PC-9 (cell line): ENCODE measurements at regions of chr4 and their contacts with region 1.

Region 1: DNA sequence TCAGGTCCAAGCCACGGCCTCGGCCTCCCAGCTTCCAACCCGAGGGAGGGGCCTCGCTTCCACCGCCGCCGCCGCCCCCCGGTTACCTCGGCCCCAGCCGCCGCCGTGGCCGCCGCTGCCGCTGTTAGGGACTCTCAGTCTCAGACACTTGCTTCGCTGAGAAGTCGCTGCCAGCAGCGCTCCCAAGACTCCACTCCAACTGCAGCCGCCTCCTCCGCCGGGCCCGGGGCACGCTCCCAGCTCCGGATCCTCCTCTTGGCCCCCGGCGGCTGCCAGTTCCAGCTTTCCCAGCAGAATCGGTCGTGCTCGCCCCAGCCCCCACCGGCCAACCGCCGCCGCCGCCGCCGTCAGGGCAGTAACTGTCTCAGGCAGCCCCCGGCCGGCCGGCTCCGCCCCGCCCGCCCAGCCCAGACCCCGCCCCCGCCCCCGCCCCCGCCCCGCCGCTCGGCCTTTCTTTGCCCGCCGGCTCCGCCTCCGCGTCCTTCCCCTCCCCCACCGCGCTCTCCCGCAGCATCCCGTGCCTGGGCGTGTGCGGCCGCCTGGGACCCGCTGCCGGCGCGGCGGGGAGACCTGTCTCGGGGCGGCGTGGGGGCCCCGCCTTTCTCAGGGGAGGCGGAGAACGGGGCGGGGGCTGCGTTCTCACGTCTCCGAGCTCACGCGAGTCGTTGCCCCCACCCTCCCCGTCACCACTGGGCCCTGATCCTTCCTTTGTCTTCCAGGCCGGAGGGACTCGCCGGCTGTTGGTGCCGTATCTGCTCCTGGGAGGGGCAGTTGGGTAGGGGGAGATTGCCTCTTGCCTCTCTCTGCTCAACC is at the start of gene ANKRD50:
- DNase-seq: peak; percentile 66 to 88
- H3K4me3 ChIP-seq: peak within 1 kb of the TSS; percentile 92
- H3K27ac ChIP-seq: peak within 1 kb of the TSS; percentile 68
- H3K4me1 ChIP-seq: peaks cover 25% of the 10 kb centered on the region
- H3K27me3 ChIP-seq: no peaks in the 10 kb centered on the region
- CTCF ChIP-seq: 0 out of 2 replicates have a peak, but pooled peaks have one; percentile 5
- total RNA-seq, gene ANKRD50: 14.4 and 17.2 TPM in 2 replicates

Region 2: GRCh38 chr4:124334119-124334518 is 378.5 kb before region 1 on chr4:
- CTCF ChIA-PET with region 1: no interaction called
- POLR2A ChIA-PET with region 1: no interaction called
- intact Hi-C with region 1: loop called (anchors 1 kb)
- DNase-seq: peak; percentile 19 to 54
- H3K4me3 ChIP-seq: no peak overlapping the region
- H3K27ac ChIP-seq: no peak overlapping the region
- H3K4me1 ChIP-seq: no peaks in the 10 kb centered on the region
- H3K27me3 ChIP-seq: no peaks in the 10 kb centered on the region
- CTCF ChIP-seq: peak; percentile 78

Region 3: GRCh38 chr4:124785645-124786044 is 73.1 kb after region 1 on chr4:
- CTCF ChIA-PET with region 1: no interaction called
- POLR2A ChIA-PET with region 1: no interaction called
- intact Hi-C with region 1: no loop called
- DNase-seq: no peak
- H3K4me3 ChIP-seq: no peak overlapping the region
- H3K27ac ChIP-seq: no peak overlapping the region
- H3K4me1 ChIP-seq: no peaks in the 10 kb centered on the region
- H3K27me3 ChIP-seq: no peaks in the 10 kb centered on the region
- CTCF ChIP-seq: 0 out of 2 replicates have a peak, but pooled peaks have one; percentile 17

Region 4: GRCh38 chr4:124903995-124904722 is 191.6 kb after region 1 on chr4:
- CTCF ChIA-PET with region 1: no interaction called
- POLR2A ChIA-PET with region 1: no interaction called
- intact Hi-C with region 1: loop called (anchors 2 kb)
- DNase-seq: peak; percentile 54 to 68
- H3K4me3 ChIP-seq: peak overlapping the region; percentile 46
- H3K27ac ChIP-seq: peak overlapping the region; percentile 65
- H3K4me1 ChIP-seq: peaks cover 30% of the 10 kb centered on the region
- H3K27me3 ChIP-seq: no peaks in the 10 kb centered on the region
- CTCF ChIP-seq: no peak

Region 5: DNA sequence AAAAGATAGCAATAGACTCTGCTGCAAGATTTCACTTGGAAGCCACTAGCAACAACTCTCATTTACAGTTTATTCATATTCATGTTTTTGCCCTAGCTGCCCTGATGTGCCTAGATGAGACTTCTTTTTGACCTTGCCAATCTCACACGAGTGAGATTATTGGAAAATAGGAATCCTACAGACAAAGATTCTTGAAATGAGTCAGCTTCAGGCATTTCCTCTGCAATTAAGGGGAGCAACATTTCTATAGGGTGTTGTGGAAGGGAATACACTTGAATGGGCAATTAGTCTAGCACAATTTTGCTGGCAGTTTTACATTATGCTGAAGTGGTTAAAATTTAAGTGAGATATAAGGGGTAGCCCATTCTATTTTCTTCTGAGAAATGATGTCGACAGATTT is 385.2 kb after region 1 on chr4:
- CTCF ChIA-PET with region 1: no interaction called
- POLR2A ChIA-PET with region 1: no interaction called
- intact Hi-C with region 1: loop called (anchors 10 kb)
- DNase-seq: no peak
- H3K4me3 ChIP-seq: no peak overlapping the region
- H3K27ac ChIP-seq: no peak overlapping the region
- H3K4me1 ChIP-seq: peaks cover 11% of the 10 kb centered on the region
- H3K27me3 ChIP-seq: no peaks in the 10 kb centered on the region
- CTCF ChIP-seq: no peak

Region 6: GRCh38 chr4:125283707-125284279 is 571.2 kb after region 1 on chr4:
- CTCF ChIA-PET with region 1: no interaction called
- POLR2A ChIA-PET with region 1: no interaction called
- intact Hi-C with region 1: loop called (anchors 5 kb)
- DNase-seq: peak in 1 of 2 experiments; percentile 60
- H3K4me3 ChIP-seq: no peak overlapping the region
- H3K27ac ChIP-seq: no peak overlapping the region
- H3K4me1 ChIP-seq: no peaks in the 10 kb centered on the region
- H3K27me3 ChIP-seq: no peaks in the 10 kb centered on the region
- CTCF ChIP-seq: peak; percentile 89